ENCODE measurements at regions of chr19 and their contacts with region 1.

Region 1: DNA sequence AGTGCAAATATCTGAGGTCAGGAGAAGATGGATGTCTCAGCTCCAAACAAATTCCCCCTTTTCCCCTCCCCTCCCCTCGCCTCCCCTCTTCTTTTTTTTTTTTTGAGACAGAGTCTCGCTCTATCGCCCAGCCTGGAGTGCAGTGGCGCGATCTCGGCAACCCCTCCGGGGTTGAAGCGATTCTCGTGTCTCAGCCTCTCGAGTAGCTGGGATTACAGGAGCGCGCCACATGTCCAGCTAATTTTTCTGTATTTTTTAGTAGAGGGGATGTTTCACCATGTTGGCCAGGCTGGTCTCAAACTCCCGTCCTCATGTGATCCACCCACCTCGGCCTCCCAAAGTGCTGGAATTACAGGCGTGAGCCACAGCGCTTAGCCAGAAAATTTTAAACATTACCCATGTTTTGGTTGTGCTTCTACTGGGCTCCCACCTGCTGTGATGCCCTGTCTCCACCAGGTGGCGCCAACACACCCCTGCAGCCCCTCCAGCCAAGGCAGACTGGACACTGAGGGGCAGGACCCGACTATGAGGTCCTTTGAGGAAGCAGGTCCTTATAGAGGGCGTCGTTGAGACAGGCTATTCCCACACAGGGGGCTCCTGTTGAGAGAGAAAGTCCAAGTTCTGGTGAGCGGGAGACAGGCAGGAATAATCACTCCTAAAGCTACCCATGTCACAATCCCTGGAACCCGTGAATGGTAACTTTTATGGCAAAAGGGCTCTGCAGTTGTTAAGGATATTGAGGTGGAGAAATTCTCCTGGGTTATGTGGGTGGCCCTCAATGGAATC is 6.3 kb downstream of the ERICH4 start:
- DNase-seq: peak; percentile 52
- H3K4me3 ChIP-seq: peak overlapping the region in 2 of 3 experiments; percentile 16 to 25
- H3K27ac ChIP-seq: no peak overlapping the region
- H3K4me1 ChIP-seq: no peaks in the 10 kb centered on the region
- H3K27me3 ChIP-seq: no peaks in the 10 kb centered on the region
- CTCF ChIP-seq: peak; percentile 95 to 99

Region 2: GRCh38 chr19:41206926-41207750 is 242.1 kb before region 1 on chr19:
- CTCF ChIA-PET with region 1: no interaction called
- dilution Hi-C with region 1: no loop called
- in situ Hi-C with region 1: no loop called
- intact Hi-C with region 1: loop called (anchors 5 kb)
- DNase-seq: no peak
- H3K4me3 ChIP-seq: no peak overlapping the region
- H3K27ac ChIP-seq: no peak overlapping the region
- H3K4me1 ChIP-seq: no peaks in the 10 kb centered on the region
- H3K27me3 ChIP-seq: no peaks in the 10 kb centered on the region
- CTCF ChIP-seq: no peak

Region 3: DNA sequence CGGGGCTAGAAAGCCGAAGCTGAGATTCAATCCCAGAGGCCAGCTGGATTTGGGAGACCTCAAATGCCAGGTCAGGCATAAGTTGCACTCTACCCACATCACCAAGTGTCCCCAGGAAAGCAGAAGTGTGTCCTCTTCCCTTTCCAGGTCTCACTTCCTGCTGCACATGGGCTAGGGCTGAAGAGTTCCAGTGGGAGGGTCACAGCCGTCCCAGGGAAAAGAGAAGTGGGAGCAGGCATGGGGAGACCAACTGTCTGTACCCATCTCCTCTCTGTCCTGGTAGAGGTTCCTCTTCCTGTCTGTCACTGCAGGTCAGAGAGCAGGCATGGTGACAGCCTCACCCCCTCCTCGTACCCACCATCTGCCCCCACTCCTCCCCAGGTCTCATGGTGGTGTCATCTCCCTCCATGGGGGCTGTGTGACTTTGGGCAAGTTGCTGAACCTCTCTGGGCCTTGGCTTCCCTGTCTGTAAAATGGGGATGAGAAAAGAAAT is 215.5 kb before region 1 on chr19:
- CTCF ChIA-PET with region 1: no interaction called
- dilution Hi-C with region 1: no loop called
- in situ Hi-C with region 1: no loop called
- intact Hi-C with region 1: no loop called
- DNase-seq: no peak
- H3K4me3 ChIP-seq: no peak overlapping the region
- H3K27ac ChIP-seq: no peak overlapping the region
- H3K4me1 ChIP-seq: no peaks in the 10 kb centered on the region
- H3K27me3 ChIP-seq: no peaks in the 10 kb centered on the region
- CTCF ChIP-seq: no peak

Region 4: DNA sequence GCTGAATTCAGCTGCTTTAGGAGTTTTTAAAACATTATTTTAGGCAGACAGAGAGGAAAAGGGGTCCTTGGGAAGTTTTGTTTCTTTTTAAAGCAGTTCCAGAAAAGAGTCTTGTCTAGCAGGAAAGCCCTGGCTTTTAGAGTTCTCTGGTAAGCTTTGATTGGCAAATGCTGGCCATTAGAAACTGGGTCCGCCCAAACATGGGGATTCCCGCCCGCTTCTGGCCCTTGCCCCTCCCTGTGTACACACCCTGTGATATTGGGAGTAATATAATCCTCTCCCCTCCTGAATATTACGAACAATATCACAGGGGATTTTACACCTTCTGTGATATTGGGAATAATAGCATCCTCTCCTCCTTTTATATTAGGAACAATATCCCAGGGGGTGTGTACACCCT is 52.6 kb after region 1 on chr19:
- CTCF ChIA-PET with region 1: no interaction called
- dilution Hi-C with region 1: no loop called
- in situ Hi-C with region 1: no loop called
- intact Hi-C with region 1: no loop called
- DNase-seq: no peak
- H3K4me3 ChIP-seq: no peak overlapping the region
- H3K27ac ChIP-seq: no peak overlapping the region
- H3K4me1 ChIP-seq: no peaks in the 10 kb centered on the region
- H3K27me3 ChIP-seq: no peaks in the 10 kb centered on the region
- CTCF ChIP-seq: no peak

Region 5: GRCh38 chr19:41521931-41522555 is 72.8 kb after region 1 on chr19:
- CTCF ChIA-PET with region 1: no interaction called
- dilution Hi-C with region 1: no loop called
- in situ Hi-C with region 1: no loop called
- intact Hi-C with region 1: loop called (anchors 1 kb)
- DNase-seq: no peak
- H3K4me3 ChIP-seq: peak overlapping the region in 2 of 3 experiments; percentile 22 to 28
- H3K27ac ChIP-seq: no peak overlapping the region
- H3K4me1 ChIP-seq: no peaks in the 10 kb centered on the region
- H3K27me3 ChIP-seq: peaks cover 18% of the 10 kb centered on the region
- CTCF ChIP-seq: no peak

Region 6: GRCh38 chr19:41541990-41542584 is 92.8 kb after region 1 on chr19:
- CTCF ChIA-PET with region 1: interaction called, 3 read pairs
- dilution Hi-C with region 1: no loop called
- in situ Hi-C with region 1: no loop called
- intact Hi-C with region 1: loop called (anchors 1 kb)
- DNase-seq: peak; percentile 14
- H3K4me3 ChIP-seq: no peak overlapping the region
- H3K27ac ChIP-seq: no peak overlapping the region
- H3K4me1 ChIP-seq: no peaks in the 10 kb centered on the region
- H3K27me3 ChIP-seq: peaks cover 3% of the 10 kb centered on the region
- CTCF ChIP-seq: peak; percentile 62 to 66

Region 7: DNA sequence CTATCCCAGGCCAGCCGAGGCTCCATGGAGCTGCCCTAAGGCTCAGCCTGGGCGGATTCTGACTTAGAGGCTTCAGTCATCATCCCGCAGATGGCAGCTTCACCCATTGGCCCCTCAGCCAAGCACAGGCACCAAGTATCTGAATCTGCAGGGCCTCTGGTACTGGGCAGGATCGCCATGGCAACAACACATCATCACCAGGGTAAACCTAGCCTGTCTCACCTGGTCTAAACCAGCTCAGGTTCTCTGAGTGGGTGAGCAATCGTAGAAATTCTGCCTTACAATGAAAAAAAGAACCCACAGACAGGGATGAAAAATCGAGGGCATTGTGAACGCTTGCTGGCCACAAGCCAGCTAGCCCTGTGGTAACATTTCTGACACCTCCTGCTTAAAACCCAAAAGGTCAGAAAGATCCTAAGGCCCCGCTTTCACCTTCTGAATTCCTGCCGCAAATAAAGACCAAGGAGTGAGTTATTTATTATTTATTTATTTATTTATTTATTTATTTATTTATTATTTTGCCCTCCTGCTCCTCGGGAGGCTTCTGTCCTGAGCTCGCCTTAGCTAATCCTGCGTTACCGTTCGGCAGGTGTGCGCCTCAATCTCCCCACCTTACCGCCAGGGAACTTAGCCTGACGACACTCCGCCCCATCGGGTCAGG is 114.7 kb after region 1 on chr19:
- CTCF ChIA-PET with region 1: no interaction called
- dilution Hi-C with region 1: no loop called
- in situ Hi-C with region 1: no loop called
- intact Hi-C with region 1: loop called (anchors 1 kb)
- DNase-seq: peak; percentile 21
- H3K4me3 ChIP-seq: no peak overlapping the region
- H3K27ac ChIP-seq: no peak overlapping the region
- H3K4me1 ChIP-seq: no peaks in the 10 kb centered on the region
- H3K27me3 ChIP-seq: peaks cover 15% of the 10 kb centered on the region
- CTCF ChIP-seq: no peak

Region 8: DNA sequence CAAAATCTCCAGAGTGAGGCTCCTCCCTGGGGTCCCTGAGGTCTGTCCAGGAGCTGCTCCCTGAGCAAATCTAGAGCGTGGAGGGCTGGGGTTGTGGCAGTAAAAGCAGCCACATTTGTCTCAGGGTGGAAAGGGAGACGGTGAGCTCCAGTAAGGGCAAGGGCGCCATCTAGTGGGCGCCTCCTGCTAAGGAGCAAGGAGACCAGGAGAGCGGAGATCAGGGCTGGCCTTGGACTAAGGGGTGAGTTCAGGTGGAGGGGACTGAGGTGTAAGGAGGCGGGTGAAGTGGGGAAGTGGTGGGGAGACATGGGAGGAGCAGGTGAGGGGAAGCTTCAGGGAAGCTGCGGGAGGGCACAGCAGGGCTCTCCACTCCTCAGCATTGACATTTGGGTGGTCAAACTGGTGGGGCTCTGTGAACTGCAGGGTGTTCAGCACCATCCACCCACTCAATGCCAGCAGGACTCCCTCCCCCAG is 121.4 kb after region 1 on chr19:
- CTCF ChIA-PET with region 1: no interaction called
- dilution Hi-C with region 1: no loop called
- in situ Hi-C with region 1: loop called (anchors 10 kb)
- intact Hi-C with region 1: loop called (anchors 1 kb)
- DNase-seq: peak; percentile 52
- H3K4me3 ChIP-seq: no peak overlapping the region
- H3K27ac ChIP-seq: no peak overlapping the region
- H3K4me1 ChIP-seq: no peaks in the 10 kb centered on the region
- H3K27me3 ChIP-seq: peaks cover 9% of the 10 kb centered on the region
- CTCF ChIP-seq: peak; percentile 82 to 94

Region 9: GRCh38 chr19:41595258-41595889 is 146.1 kb after region 1 on chr19:
- CTCF ChIA-PET with region 1: no interaction called
- dilution Hi-C with region 1: no loop called
- in situ Hi-C with region 1: no loop called
- intact Hi-C with region 1: loop called (anchors 1 kb)
- DNase-seq: peak; percentile 72
- H3K4me3 ChIP-seq: no peak overlapping the region
- H3K27ac ChIP-seq: no peak overlapping the region
- H3K4me1 ChIP-seq: no peaks in the 10 kb centered on the region
- H3K27me3 ChIP-seq: no peaks in the 10 kb centered on the region
- CTCF ChIP-seq: peak; percentile 72 to 77

Measured in mammary epithelial cell (primary cell).